HCT116 (cell line): ENCODE measurements at regions of chr1 and their contacts with region 1.

Region 1: DNA sequence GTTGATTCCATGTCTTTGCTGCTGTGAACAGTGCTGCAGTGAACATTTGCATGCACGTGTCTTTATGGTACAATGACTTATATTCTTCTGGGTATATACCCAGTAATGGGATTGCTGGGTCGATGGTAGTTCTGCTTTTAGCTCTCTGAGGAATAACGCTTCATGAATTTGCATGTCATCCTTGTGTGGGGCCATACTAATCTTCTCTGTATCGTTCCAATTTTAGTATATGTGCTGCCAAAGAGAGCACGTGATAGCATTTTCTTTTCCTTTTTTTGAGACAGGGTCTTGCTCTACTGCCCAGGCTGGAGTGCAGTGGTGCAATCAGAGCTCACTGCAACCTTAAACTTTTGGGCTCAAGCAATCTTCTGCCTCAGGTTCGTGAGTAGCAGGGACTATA is 24.9 kb upstream of the MAP1LC3C start:
- DNase-seq: no peak
- ATAC-seq: no peak
- H3K4me3 ChIP-seq: no peak overlapping the region
- H3K27ac ChIP-seq: no peak overlapping the region
- H3K4me1 ChIP-seq: no peaks in the 10 kb centered on the region
- H3K27me3 ChIP-seq: no peaks in the 10 kb centered on the region
- CTCF ChIP-seq: no peak
- POLR2A ChIP-seq: no peak
- RAD21 ChIP-seq: no peak

Region 2: GRCh38 chr1:242128951-242129502 is 105.2 kb after region 1 on chr1:
- CTCF ChIA-PET with region 1: interaction called, 3 read pairs
- POLR2A ChIA-PET with region 1: no interaction called
- RAD21 ChIA-PET with region 1: no interaction called
- intact Hi-C with region 1: loop called (anchors 5 kb)
- DNase-seq: peak; percentile 31
- ATAC-seq: peak; percentile 88
- H3K4me3 ChIP-seq: no peak overlapping the region
- H3K27ac ChIP-seq: no peak overlapping the region
- H3K4me1 ChIP-seq: no peaks in the 10 kb centered on the region
- H3K27me3 ChIP-seq: 0 out of 2 replicates have a peak, but pooled peaks cover 2% of the 10 kb centered on the region
- CTCF ChIP-seq: peak; percentile 34 to 53 (median 43); a peak in 5 of 6 replicates
- POLR2A ChIP-seq: no peak
- RAD21 ChIP-seq: peak; percentile 43

Region 3: DNA sequence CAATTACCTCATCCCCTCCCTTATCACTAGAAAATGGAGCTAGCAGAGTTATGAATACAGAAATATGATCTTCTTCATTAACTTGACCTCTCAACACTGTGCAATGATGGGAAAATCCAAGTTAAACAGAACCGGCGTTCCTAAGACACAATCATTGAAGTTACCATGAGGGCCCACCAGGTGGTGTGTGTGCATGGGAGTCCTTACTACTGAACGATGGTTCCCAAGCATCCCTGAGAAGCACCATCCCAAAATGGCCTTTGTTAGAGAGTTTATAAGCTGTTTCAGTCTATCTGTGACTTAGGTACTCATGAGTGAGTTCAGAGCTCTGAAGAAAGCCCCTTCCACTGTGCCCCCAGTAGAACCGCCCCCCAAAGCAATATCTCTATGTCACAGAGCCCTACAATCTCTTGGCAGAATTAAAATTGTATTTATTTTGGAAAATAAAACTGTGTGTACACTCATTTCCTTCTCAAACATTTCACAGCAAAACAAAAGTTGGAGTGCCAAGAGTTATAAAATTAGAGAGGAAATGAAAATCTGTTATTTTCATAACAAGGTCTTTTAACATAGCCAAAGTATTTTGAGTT is 443.8 kb after region 1 on chr1:
- CTCF ChIA-PET with region 1: no interaction called
- POLR2A ChIA-PET with region 1: no interaction called
- RAD21 ChIA-PET with region 1: no interaction called
- intact Hi-C with region 1: loop called (anchors 10 kb)
- DNase-seq: peak; percentile 22
- ATAC-seq: peak; percentile 80
- H3K4me3 ChIP-seq: no peak overlapping the region
- H3K27ac ChIP-seq: no peak overlapping the region
- H3K4me1 ChIP-seq: no peaks in the 10 kb centered on the region
- H3K27me3 ChIP-seq: no peaks in the 10 kb centered on the region
- CTCF ChIP-seq: peak; percentile 39 to 65 (median 64); a peak in 5 of 6 replicates
- POLR2A ChIP-seq: no peak
- RAD21 ChIP-seq: peak; percentile 54